WTC11 (cell line): ENCODE measurements at regions of chr19 and their contacts with region 1.

Region 1: DNA sequence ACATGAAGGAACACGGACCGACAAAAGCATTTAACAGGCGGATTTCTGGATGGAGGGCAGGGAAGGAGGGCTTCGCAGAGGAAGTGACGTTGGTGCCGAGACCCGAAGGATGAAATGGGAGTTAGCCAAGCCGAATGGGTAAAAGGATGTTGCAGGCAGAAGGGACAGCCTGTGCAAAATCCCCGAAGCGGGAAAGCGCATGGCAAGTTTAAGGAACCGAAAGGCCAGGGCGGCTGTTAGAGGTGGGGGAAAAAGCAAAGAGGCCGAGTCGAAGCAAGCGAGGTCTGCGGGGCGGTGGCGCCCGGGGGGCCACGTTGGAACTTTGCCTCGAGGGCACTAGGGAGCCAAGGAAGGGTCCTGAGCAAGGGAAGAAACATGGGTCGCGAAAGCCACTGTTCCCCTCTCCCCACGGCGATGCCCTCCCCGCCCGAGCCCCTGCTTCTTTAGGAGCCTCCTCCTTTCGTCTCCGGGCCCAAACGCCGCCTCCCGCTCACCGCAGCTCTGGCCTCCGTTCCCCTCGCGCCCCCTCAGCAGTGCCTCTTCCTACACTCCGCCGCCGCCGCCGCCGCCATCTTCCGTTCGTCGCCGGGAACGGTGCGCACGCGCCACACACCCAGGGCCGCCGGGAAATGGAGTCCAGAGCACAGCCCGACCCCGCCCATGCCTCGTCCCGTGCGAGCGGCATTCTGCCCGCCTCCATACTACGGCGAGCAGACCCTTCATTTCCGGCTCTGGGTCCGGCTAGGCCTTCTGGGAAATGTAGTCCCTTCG is at the start of gene SYMPK:
- DNase-seq: peak; percentile 99
- ATAC-seq: peak; percentile 93
- H3K4me3 Mint-ChIP-seq: peak within 1 kb of the TSS; percentile 89
- H3K27ac Mint-ChIP-seq: peak within 1 kb of the TSS; percentile 99
- H3K4me1 Mint-ChIP-seq: peaks cover 40% of the 10 kb centered on the region
- H3K27me3 Mint-ChIP-seq: no peaks in the 10 kb centered on the region
- CTCF ChIP-seq: no peak
- total RNA-seq, gene SYMPK: 105 to 111 TPM (median 106 TPM) in 3 replicates

Region 2: GRCh38 chr19:45792470-45793177 is 70.1 kb before region 1 on chr19 and contains the start of gene DMWD:
- CTCF ChIA-PET with region 1: interaction called, 11 read pairs
- POLR2A ChIA-PET with region 1: interaction called, 3 read pairs
- DNase-seq: peak; percentile 100
- ATAC-seq: peak; percentile 98
- H3K4me3 Mint-ChIP-seq: peak within 1 kb of the TSS; percentile 91
- H3K27ac Mint-ChIP-seq: peak within 1 kb of the TSS; percentile 61
- H3K4me1 Mint-ChIP-seq: peaks cover 17% of the 10 kb centered on the region
- H3K27me3 Mint-ChIP-seq: peaks cover 33% of the 10 kb centered on the region
- CTCF ChIP-seq: no peak
- total RNA-seq, gene DMWD: 50.2 to 60.7 TPM (median 56.6 TPM) in 3 replicates

Region 3: GRCh38 chr19:45798995-45799517 is 63.7 kb before region 1 on chr19:
- CTCF ChIA-PET with region 1: interaction called, 11 read pairs
- POLR2A ChIA-PET with region 1: no interaction called
- DNase-seq: peak; percentile 75
- ATAC-seq: peak; percentile 86
- H3K4me3 Mint-ChIP-seq: no peak overlapping the region; the same call in 1 of the 2 replicates
- H3K27ac Mint-ChIP-seq: no peak overlapping the region
- H3K4me1 Mint-ChIP-seq: peaks cover 6% of the 10 kb centered on the region
- H3K27me3 Mint-ChIP-seq: peaks cover 57% of the 10 kb centered on the region
- CTCF ChIP-seq: peak; percentile 71

Region 4: GRCh38 chr19:45827459-45828093 is 35.2 kb before region 1 on chr19:
- CTCF ChIA-PET with region 1: no interaction called
- POLR2A ChIA-PET with region 1: no interaction called
- DNase-seq: no peak
- ATAC-seq: peak; percentile 52
- H3K4me3 Mint-ChIP-seq: no peak overlapping the region
- H3K27ac Mint-ChIP-seq: peak overlapping the region; percentile 58; the same call in 1 of the 2 replicates
- H3K4me1 Mint-ChIP-seq: no peaks in the 10 kb centered on the region
- H3K27me3 Mint-ChIP-seq: no peaks in the 10 kb centered on the region
- CTCF ChIP-seq: no peak

Region 5: GRCh38 chr19:45842198-45842597 is 20.6 kb before region 1 on chr19:
- CTCF ChIA-PET with region 1: no interaction called
- POLR2A ChIA-PET with region 1: no interaction called
- DNase-seq: no peak
- ATAC-seq: no peak
- H3K4me3 Mint-ChIP-seq: no peak overlapping the region
- H3K27ac Mint-ChIP-seq: no peak overlapping the region
- H3K4me1 Mint-ChIP-seq: no peaks in the 10 kb centered on the region
- H3K27me3 Mint-ChIP-seq: no peaks in the 10 kb centered on the region
- CTCF ChIP-seq: no peak

Region 6: GRCh38 chr19:45886427-45887199 is 23.9 kb after region 1 on chr19:
- CTCF ChIA-PET with region 1: interaction called, 212 read pairs
- POLR2A ChIA-PET with region 1: interaction called, 42 read pairs
- DNase-seq: peak; percentile 92
- ATAC-seq: peak; percentile 49
- H3K4me3 Mint-ChIP-seq: peak overlapping the region; percentile 94
- H3K27ac Mint-ChIP-seq: peak overlapping the region; percentile 96
- H3K4me1 Mint-ChIP-seq: peaks cover 20% of the 10 kb centered on the region
- H3K27me3 Mint-ChIP-seq: no peaks in the 10 kb centered on the region
- CTCF ChIP-seq: no peak

Region 7: GRCh38 chr19:45902651-45903625 is 40.2 kb after region 1 on chr19:
- CTCF ChIA-PET with region 1: interaction called, 41 read pairs
- POLR2A ChIA-PET with region 1: interaction called, 6 read pairs
- DNase-seq: peak; percentile 99
- ATAC-seq: peak; percentile 84
- H3K4me3 Mint-ChIP-seq: peak overlapping the region; percentile 91
- H3K27ac Mint-ChIP-seq: peak overlapping the region; percentile 57; the same call in 1 of the 2 replicates
- H3K4me1 Mint-ChIP-seq: peaks cover 12% of the 10 kb centered on the region
- H3K27me3 Mint-ChIP-seq: peaks cover 25% of the 10 kb centered on the region
- CTCF ChIP-seq: no peak

Region 8: DNA sequence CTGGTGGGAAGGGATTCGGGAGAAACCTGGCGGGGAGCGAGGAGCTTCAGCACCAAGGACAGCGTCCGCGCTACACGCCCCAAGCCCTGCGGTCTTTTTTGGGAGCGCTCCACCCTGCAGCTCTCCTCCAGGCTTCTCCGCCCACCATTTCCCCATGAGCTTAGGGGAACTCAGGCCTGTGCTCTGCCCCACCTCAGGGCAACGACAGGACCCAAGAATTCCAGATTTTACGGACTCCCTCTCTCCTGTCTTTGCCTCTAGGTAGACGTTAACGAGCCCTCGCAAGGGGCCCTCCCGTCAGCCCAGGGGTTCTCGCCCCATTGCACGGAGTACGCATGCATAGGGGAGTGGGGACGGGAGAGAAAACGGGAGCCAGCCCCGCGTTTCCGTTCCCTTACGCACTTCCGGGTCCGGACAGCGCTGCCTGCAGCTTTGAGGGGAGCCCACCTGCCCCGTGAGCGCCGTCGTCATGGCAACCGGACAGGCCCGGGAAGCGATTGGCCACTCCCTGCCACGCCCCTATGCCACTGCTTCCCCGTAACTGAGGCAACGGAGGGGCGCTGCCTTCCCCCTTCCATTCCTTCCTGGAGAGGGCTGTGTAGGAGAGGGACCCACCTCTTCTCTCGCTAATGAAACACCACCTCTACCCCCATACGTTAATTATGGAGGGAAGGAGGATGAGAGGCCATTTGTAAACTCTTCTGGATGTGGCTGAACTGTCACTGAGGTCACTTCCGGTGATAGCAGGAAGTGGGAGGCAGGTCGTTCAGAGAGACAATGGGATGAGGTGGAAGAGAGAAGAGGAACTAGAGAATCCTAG is 90.1 kb after region 1 on chr19:
- CTCF ChIA-PET with region 1: no interaction called
- POLR2A ChIA-PET with region 1: no interaction called
- DNase-seq: peak; percentile 95
- ATAC-seq: peak; percentile 92
- H3K4me3 Mint-ChIP-seq: peak overlapping the region; percentile 78
- H3K27ac Mint-ChIP-seq: peak overlapping the region; percentile 85
- H3K4me1 Mint-ChIP-seq: peaks cover 6% of the 10 kb centered on the region; the same call in 1 of the 2 replicates
- H3K27me3 Mint-ChIP-seq: peaks cover 72% of the 10 kb centered on the region
- CTCF ChIP-seq: no peak

Region 9: DNA sequence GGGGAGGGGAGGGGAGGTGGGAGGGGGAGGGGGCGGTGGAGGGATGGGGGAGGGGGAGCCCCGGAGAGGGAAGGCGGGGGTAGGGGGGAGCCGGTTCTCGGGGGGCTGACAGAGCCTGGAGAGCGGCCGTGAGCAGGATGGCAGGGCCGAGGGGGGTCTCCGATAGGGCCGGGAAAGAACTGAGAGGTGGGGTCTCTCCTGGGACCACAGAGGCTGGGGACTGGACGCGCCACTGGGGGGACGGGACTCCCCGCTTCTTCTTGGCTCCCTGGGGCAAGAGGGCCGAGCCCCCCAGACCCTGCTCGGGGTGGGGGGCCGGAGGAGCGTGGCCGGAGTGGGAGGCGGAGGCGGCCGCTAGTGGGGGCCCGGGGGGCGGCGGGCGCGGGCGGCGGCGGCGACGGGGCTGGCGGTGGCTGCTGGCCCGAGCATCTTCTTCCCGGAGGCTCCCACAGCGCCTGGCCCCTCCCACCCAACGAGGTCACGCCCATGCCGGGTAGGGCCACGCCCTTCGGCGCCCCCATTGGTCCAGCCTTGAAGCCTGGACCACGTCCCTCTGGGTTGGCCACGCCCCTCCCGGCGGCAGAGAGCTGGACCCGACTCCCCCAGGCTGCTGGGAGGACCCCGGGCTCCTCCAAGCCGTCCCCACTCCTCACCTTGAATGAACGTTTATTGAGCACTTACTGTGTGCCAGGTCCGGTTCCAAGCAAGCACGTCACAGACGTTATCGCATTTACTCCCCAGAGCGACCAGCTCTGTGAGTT is 111.0 kb after region 1 on chr19 and contains the start of gene NOVA2:
- CTCF ChIA-PET with region 1: interaction called, 10 read pairs
- POLR2A ChIA-PET with region 1: no interaction called
- DNase-seq: peak; percentile 99
- ATAC-seq: peak; percentile 99
- H3K4me3 Mint-ChIP-seq: peak within 1 kb of the TSS; percentile 61
- H3K27ac Mint-ChIP-seq: no peak within 1 kb of the TSS
- H3K4me1 Mint-ChIP-seq: peaks cover 16% of the 10 kb centered on the region
- H3K27me3 Mint-ChIP-seq: peaks cover 87% of the 10 kb centered on the region
- CTCF ChIP-seq: no peak
- total RNA-seq, gene NOVA2: 11.3 to 15.6 TPM (median 15.4 TPM) in 3 replicates